Pancreas (tissue), 10 donors: ENCODE measurements at regions of chr19 and their contacts with region 1.

Region 1: GRCh38 chr19:21482863-21483276 is 22.5 kb upstream of the ZNF429 start:
- DNase-seq: peak; percentile 42 to 83 (median 74)
- ATAC-seq: peak; percentile 83 to 94 (median 90)
- H3K4me3 ChIP-seq: no peak overlapping the region
- H3K27ac ChIP-seq: peak overlapping the region in 1 of 4 donors; percentile 23
- H3K4me1 ChIP-seq: no peaks in the 10 kb centered on the region
- H3K27me3 ChIP-seq: no peaks in the 10 kb centered on the region
- CTCF ChIP-seq: peak; percentile 90 to 95 (median 91)

Region 2: DNA sequence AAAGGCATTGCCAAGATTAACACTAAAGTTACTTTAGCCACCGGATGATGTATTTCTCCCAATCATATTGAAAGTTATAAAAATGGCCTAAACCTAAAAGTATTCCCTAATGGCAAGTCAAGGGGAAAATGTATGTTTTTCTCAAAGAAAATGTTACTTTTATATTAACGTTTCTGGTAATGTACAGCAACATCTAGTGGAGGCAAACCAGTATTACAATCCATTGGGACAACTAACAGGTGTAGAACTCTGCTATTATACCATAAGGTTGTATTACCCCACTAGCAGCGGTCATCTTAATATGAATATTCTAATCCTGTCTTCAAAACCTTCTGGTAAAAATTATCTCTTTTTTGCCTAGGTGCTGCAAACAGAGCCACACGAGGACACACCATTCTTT is 215.3 kb after region 1 on chr19:
- intact Hi-C with region 1: loop called in 1 of 3 experiments (anchors 10 kb)
- DNase-seq: no peak
- ATAC-seq: peak; percentile 82 to 93 (median 91)
- H3K4me3 ChIP-seq: no peak overlapping the region
- H3K27ac ChIP-seq: no peak overlapping the region
- H3K4me1 ChIP-seq: no peaks in the 10 kb centered on the region
- H3K27me3 ChIP-seq: no peaks in the 10 kb centered on the region
- CTCF ChIP-seq: peak; percentile 55 to 76 (median 66)